Dendritic cell treated with granulocyte-macrophage colony-stimulating factor and Interleukin-4, amounts not matched to agents 40 ng/mL and 50 ng/mL, for 4 days (primary cell): ENCODE measurements at regions of chr1 and their contacts with region 1.

Region 1: GRCh38 chr1:109075531-109076490 is at the start of gene TAF13:
- H3K4me3 Mint-ChIP-seq: peak within 1 kb of the TSS; percentile 97
- H3K27ac Mint-ChIP-seq: peak within 1 kb of the TSS; percentile 99
- H3K4me1 Mint-ChIP-seq: peaks cover 24% of the 10 kb centered on the region
- H3K27me3 Mint-ChIP-seq: no peaks in the 10 kb centered on the region

Region 2: DNA sequence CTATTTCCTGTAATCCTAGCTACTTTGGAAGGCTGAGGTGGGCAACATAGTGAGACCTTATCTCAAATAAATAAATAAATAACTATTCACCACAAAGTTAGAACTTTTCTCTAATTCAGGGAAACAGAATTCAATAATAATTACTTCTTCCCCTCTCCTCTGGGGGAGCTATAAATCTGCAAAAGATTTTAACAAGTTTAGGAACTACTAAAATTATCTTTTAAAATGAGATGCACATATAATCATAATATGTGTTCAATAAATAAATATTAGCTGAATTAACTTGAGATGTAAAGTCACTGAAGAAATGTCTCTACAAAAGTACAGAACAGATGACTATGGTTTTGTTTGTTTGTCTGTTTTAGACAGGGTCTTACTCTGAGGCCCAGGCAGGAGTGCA is 48.0 kb before region 1 on chr1:
- intact Hi-C with region 1: no loop called
- H3K4me3 Mint-ChIP-seq: no peak overlapping the region
- H3K27ac Mint-ChIP-seq: no peak overlapping the region
- H3K4me1 Mint-ChIP-seq: no peaks in the 10 kb centered on the region
- H3K27me3 Mint-ChIP-seq: no peaks in the 10 kb centered on the region

Region 3: DNA sequence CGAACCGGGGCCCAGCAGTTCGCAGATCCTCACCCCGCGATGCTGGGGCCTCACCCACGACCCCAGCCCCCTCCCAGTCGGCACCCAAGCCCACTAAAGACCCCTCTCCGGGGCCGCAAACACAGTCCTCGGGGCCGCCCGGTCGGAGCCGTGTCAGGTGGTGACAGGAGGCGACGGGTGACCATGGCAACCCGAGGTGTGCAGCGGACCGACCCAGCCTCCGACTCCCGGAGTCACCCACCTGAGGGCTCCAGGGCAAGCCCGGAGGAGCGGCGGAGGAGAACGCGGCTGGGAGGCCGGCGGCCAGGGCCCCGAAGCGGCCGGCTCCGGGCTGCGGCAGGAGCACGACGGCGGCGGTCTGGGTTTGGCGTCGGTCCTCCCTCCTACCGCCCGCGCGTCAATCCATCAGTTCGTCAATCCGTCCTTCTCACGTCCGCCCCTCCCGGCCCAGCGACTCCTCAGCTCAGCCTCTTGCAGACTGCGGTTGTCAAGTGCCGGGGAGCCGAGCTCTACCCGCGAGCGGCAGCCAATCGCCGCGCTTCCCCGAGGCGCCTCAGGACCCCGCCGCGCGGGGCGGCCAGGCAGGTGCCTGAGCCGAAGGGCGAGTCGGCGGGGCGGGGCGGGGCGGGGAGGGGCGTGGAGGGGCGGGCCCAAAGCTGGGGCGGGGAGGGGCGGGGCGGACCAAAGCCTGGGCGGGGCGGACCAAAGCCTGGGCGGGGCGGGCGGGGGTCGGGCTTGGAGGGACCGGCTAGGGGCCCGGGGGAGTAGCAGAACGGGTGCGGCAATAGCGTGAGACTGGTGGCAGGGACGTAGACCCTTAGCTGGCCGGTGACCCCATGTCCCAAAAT is 34.0 kb before region 1 on chr1 and contains the start of gene WDR47:
- intact Hi-C with region 1: loop called (anchors 5 kb)
- H3K4me3 Mint-ChIP-seq: peak within 1 kb of the TSS; percentile 98
- H3K27ac Mint-ChIP-seq: peak within 1 kb of the TSS; percentile 93
- H3K4me1 Mint-ChIP-seq: peaks cover 5% of the 10 kb centered on the region
- H3K27me3 Mint-ChIP-seq: peaks cover 8% of the 10 kb centered on the region

Region 4: GRCh38 chr1:109090196-109091077 is 14.6 kb after region 1 on chr1 and contains the start of gene TMEM167B:
- intact Hi-C with region 1: loop called (anchors 1 kb)
- H3K4me3 Mint-ChIP-seq: peak within 1 kb of the TSS; percentile 97
- H3K27ac Mint-ChIP-seq: peak within 1 kb of the TSS; percentile 97
- H3K4me1 Mint-ChIP-seq: peaks cover 25% of the 10 kb centered on the region
- H3K27me3 Mint-ChIP-seq: no peaks in the 10 kb centered on the region